HEK293T (cell line): ENCODE measurements at regions of chr5 and their contacts with region 1.

Region 1: DNA sequence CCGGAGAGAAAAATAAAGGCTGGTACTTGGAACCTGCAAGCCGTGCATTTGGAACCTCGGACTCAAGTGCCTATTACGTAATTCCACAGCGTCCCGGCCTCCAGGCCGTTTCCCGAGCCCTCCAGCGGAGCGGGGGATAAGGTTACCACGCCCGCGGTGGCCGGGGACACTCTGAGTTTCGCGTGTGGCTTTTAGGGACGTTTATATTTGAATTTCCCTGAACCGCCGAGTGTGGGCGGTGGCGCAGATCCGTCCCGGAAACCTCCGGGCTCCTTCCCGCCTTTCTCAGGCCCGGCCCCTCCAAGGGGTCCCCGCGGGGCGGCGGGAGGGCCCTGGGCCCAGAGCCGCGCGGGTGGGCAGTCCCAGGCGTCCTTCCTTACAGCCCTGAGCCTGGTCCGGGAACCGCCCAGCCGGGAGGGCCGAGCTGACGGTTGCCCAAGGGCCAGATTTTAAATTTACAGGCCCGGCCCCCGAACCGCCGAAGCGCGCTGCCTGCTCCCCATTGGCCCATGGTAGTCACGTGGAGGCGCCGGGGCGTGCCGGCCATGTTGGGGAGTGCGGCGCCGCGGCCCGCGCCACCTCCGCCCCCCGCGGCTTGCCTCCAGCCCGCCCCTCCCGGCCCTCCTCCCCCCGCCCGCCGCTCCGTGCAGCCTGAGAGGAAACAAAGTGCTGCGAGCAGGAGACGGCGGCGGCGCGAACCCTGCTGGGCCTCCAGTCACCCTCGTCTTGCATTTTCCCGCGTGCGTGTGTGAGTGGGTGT is at the start of gene LMNB1:
- DNase-seq: peak; percentile 86

Region 2: DNA sequence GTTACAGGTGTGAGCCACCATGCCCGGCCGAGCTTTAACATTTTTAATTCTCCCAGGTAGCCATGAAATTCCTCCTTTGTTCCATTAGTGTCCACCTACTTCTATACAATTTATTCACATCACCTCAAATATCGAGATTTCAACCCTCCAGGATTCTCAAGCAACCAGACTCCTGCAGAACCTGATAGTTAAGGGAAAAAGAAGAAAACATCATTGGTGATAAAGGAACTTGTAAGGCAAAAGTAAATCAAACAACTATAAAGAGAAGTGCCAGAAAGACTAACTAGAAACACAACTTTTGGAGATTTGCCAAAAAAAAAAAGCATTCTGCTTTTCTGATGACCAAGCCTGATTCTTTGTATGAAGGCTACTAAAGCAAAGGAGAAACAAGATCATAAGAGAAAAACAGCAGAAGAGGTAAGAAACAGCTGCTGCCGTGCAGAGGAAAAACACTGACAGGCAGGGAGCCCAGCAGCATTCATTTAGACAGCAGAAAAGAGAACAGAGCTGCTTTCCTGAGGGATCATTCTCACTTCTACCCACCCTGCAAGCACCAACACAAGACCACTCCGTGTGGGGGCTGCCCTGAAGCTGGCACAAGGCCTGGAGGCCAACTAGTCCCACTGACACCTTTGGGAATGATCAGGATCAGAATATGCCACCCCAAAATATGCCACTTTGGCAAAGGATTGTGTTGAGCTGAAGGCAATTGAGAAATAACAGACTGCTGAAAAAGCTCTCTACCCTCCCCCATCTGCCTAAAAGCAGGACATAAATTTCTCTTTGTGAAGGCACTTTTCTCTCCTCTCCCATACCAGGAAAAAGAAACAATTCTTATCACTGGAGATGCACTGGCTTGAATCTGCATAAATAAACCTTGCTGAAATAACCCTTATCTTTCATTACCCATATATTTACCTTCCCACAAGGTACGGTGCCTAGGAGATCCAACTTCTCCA is 256.8 kb before region 1 on chr5:
- CTCF ChIA-PET with region 1: no interaction called
- POLR2A ChIA-PET with region 1: no interaction called
- DNase-seq: no peak

Region 3: DNA sequence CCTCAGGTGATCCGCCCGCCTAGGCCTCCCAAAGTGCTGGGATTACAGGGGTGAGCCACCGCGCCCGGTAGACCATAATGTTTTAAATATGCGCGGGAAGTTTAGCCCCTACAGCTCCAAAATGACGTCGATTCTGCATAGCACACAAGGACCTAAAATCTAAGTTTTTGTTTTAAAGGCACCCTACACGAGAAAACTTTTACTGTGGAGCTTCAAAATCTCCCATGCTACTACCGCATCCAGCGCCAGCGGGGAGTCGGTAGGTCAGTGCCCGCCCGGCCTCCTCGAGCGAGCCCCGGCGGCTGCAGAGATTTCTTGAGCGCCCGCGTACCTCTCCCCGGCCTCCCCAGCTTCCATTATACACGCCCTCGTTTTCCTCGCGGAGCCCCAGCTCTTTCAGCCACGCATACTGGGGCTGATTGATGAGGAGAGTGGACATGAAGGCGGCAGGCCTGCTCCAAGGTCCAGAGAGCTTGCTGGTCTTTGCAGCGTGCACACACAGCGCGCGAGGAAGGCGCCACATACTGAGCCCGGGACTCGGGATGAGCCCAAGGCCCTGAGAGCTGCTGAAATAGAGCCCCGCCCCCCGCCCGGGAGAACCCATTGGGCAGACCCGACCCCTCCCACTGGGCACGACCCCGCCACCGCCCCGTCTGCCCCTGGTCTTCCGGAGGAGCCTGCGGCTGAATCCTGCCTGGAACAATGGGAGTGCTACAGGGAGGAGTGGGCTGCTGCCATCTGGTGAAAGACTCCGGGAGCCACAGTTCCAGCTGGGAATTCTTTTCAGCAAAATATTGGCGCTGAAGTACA is 181.8 kb before region 1 on chr5 and contains the start of gene ALDH7A1:
- CTCF ChIA-PET with region 1: no interaction called
- POLR2A ChIA-PET with region 1: interaction called, 10 read pairs
- DNase-seq: peak; percentile 94

Region 4: DNA sequence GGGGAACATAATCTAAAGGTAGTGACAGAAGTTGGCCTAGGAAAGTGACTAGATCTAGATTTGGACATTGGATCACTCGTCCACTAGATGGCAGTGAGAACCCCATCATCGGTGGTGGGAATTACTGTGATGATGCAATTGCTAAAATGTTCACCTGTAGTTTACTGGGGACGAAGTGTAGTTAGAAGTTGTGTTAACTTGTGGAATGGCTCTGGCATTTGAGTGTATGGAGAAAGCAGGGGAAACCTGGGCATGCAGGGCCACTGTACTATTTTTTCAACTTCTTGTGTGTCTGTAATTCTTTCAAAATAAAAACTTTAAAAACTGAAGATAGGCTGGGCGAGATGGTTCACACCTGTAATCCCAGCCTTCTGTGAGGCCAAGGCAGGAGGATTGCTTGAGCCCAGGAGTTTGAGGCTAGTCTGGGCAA is 100.5 kb before region 1 on chr5:
- CTCF ChIA-PET with region 1: interaction called, 80 read pairs
- POLR2A ChIA-PET with region 1: interaction called, 78 read pairs
- DNase-seq: peak; percentile 79

Region 5: GRCh38 chr5:126723643-126724042 is 53.0 kb before region 1 on chr5:
- CTCF ChIA-PET with region 1: no interaction called
- POLR2A ChIA-PET with region 1: interaction called, 17 read pairs
- DNase-seq: no peak

Region 6: DNA sequence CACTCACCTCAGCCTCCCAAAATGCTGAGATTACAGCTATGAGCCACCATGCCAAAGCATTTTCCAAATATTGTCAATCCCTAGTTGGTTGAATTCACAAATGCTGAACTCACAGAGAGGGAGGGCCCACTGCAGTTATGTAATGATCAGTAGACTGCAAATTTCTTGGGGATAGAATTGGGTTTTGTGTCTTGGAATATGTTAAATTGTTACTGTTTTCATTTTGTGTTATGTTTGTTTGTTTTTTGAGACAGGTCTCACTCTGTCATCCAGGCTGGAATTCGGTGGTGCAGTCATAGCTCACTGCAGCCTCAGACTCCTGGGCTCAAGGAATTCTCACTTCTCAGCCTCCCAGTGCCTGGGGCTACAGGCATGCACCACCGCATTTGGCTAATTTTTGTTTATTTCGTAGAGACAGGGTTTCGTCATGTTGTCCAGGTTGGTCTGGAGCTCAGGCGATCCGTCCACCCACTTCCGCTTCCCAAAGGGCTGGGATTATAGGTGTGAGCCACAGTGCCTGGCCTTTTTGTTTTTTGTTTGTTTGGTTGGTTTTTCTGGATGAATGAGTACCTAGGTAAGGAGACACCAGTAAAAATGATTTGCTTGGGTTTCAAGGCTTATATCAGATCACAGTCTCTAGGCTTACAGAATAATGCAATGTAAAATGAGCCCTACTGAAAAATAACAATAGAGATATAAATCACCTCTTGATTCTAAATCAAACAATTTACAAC is 31.3 kb before region 1 on chr5:
- CTCF ChIA-PET with region 1: interaction called, 3 read pairs
- POLR2A ChIA-PET with region 1: interaction called, 42 read pairs
- DNase-seq: no peak

Region 7: DNA sequence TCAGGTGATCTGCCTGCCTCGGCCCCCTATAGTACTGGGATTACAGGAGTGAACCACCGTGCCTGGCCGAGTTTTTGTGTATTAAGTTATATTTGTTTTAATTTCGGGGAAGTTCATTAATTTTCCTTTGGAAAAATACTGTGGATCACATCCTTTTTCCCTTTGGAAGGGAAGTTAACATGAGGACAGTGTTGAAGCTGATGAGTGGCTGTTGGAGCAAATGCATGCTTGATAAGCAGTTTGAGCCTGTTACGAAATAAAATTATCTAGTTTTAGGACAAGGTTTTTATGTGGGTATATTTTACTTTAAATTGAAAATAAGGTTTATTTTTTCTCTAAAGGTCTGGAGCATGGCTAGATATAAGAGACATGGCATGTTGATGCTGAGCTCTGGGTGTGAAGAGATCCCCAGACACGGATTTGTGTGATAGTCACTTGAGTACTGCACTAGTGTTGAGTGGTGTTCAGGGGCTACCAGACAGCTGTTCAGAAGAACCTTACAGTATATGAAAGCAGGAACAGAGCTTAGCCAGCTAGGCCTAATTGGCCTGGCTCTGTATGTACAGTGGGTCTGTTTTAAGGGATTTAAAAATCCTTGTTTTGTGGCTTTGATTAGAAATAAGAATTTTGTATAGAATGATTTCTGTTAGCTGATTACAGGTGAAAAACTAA is 17.6 kb after region 1 on chr5:
- CTCF ChIA-PET with region 1: interaction called, 8 read pairs
- POLR2A ChIA-PET with region 1: interaction called, 23 read pairs
- DNase-seq: no peak

Region 8: GRCh38 chr5:126808521-126808988 is 31.9 kb after region 1 on chr5:
- CTCF ChIA-PET with region 1: interaction called, 5 read pairs
- POLR2A ChIA-PET with region 1: interaction called, 10 read pairs
- DNase-seq: peak; percentile 28